ENCODE measurements at regions of chr20 and their contacts with region 1.

Region 1: DNA sequence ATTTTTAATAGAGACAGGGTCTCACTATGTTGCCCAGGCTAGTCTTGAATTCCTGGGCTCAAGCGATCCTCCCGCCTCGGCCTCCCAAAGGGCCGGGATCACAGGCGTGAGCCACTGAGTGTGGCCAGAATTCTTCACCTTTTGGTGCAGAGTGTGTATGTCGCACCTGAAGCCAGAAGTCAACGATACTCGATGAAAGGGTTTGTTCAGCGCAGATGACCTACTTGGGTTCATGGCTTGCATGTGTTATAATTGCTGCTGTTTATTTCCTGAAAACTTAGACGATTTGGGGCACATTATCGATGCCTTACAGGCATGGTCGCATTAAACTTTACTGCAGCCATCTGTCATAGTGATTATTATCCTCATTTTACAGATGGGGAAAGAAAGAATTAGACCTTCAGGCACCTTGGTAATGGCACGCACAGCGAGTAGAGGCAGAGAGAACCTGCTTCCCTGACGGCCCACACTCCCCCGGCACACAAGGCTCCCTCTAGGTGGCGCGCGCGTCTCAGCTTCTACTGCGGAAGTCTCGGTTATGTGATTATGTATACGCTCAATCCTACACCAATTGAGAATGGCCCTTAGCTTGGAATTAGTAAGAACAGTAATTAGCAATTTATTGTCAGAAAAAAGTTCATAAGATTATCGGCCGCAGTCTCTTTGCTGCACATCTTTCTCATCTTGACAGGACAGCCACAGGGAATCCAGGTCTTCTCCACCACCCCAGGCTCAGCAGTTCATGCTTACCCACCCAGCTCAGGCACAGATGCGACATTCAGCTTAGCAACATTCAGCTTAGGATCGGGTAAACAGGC is 212.8 kb upstream of the PROKR2 start:
- DNase-seq: peak; percentile 16
- H3K4me3 ChIP-seq: no peak overlapping the region
- H3K27ac ChIP-seq: no peak overlapping the region
- H3K27me3 ChIP-seq: peaks cover 3% of the 10 kb centered on the region
- CTCF ChIP-seq: peak; percentile 90

Region 2: DNA sequence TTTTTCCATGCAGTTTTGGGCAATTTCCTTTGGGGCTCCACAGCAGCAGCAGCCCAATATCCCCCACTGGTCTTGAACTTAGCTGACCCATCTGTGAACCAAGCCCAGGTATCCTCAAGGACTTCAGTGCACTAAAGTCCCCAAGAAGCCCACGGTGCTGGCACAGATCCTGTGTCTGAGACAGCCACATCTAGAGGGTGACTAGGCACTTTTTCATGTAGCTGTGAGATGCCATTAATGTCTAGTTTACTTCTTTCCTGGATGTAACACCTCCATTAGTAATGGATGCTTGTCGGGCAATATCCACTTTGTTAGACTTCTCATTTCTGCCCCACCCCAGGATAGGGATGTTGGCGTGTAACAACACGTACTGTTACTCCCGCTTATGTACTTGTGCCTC is 36.6 kb before region 1 on chr20:
- CTCF ChIA-PET with region 1: no interaction called
- POLR2A ChIA-PET with region 1: no interaction called
- DNase-seq: no peak
- H3K4me3 ChIP-seq: no peak overlapping the region
- H3K27ac ChIP-seq: no peak overlapping the region
- H3K27me3 ChIP-seq: no peaks in the 10 kb centered on the region
- CTCF ChIP-seq: no peak

Region 3: DNA sequence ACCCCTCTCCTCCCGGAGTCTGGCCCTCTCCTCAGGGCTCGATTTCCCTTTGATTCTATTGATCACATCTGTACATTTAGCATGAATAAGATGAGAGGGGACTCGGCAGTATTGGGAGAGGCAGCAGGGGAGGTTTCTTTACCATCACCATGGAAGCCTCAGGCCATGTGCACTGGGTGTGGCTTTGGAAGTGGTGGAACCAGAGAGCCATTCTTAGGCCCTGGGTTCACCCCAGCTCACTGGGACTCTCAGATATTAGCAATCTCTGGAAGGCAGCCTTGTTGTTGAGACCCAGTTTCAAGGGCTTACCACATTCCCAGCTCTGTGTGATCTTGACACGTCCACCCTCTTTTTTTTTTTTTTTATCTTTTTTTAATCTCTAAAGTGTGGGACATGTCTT is 16.8 kb before region 1 on chr20:
- CTCF ChIA-PET with region 1: no interaction called
- POLR2A ChIA-PET with region 1: no interaction called
- DNase-seq: no peak
- H3K4me3 ChIP-seq: no peak overlapping the region
- H3K27ac ChIP-seq: no peak overlapping the region
- H3K27me3 ChIP-seq: no peaks in the 10 kb centered on the region
- CTCF ChIP-seq: no peak

Region 4: GRCh38 chr20:5687884-5688283 is 158.3 kb after region 1 on chr20:
- CTCF ChIA-PET with region 1: no interaction called
- POLR2A ChIA-PET with region 1: no interaction called
- DNase-seq: no peak
- H3K4me3 ChIP-seq: no peak overlapping the region
- H3K27ac ChIP-seq: no peak overlapping the region
- H3K27me3 ChIP-seq: peaks cover 8% of the 10 kb centered on the region
- CTCF ChIP-seq: no peak

Region 5: GRCh38 chr20:5996765-5997164 is 467.2 kb after region 1 on chr20:
- CTCF ChIA-PET with region 1: interaction called, 10 read pairs
- POLR2A ChIA-PET with region 1: no interaction called
- DNase-seq: no peak
- H3K4me3 ChIP-seq: no peak overlapping the region
- H3K27ac ChIP-seq: no peak overlapping the region
- H3K27me3 ChIP-seq: no peaks in the 10 kb centered on the region
- CTCF ChIP-seq: no peak

Region 6: GRCh38 chr20:6074145-6074561 is 544.6 kb after region 1 on chr20:
- CTCF ChIA-PET with region 1: interaction called, 75 read pairs
- POLR2A ChIA-PET with region 1: no interaction called
- DNase-seq: no peak
- H3K4me3 ChIP-seq: no peak overlapping the region
- H3K27ac ChIP-seq: no peak overlapping the region
- H3K27me3 ChIP-seq: peaks cover 2% of the 10 kb centered on the region
- CTCF ChIP-seq: peak; percentile 59

Measured in AG04450 (cell line).